CD4-positive, alpha-beta T cell (primary cell): ENCODE measurements at regions of chr10 and their contacts with region 1.

Region 1: GRCh38 chr10:100535715-100536353 is at the start of gene HIF1AN:
- DNase-seq: peak; percentile 75 to 97 (median 85)
- ATAC-seq: peak; percentile 99
- H3K4me3 ChIP-seq: peak within 1 kb of the TSS; percentile 77
- H3K4me3 Mint-ChIP-seq: peak within 1 kb of the TSS; percentile 31
- H3K27ac ChIP-seq: peak within 1 kb of the TSS; percentile 59 to 67
- H3K27ac Mint-ChIP-seq: peak within 1 kb of the TSS; percentile 27
- H3K4me1 ChIP-seq: peaks cover 20% of the 10 kb centered on the region
- H3K4me1 Mint-ChIP-seq: peaks cover 9% of the 10 kb centered on the region
- H3K27me3 ChIP-seq: no peaks in the 10 kb centered on the region
- H3K27me3 Mint-ChIP-seq: no peaks in the 10 kb centered on the region
- CTCF ChIP-seq: peak; percentile 88
- total RNA-seq, gene HIF1AN: 29.7 to 30.5 TPM

Region 2: DNA sequence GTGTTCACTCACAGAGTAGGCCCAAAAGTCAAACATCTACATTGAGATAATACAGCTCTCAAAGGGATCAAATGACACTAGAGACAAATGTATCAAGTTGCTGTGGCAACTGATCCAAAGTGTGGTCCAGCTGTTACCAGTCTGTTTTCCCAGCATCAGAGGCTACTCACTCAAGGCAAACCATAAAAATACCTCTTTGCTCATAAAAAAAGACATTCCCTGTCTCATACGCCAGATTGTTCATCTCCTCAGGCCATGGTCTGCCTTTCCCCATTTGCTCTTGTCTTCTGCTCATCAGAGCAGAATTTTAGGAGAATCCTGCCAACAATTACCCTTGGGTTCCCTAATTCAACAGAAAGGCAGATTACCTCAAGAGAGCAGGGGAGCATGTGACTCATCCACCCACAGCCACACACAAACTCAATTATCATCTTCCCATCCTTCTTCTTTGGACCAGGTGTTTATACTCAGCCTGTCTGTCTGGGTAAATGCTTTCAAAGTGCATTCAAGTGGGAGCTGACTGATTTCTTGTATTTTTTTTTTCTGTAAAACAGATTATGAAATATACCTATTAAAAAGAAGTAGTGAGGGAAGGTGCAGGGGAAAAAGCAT is 1862.6 kb before region 1 on chr10:
- CTCF ChIA-PET with region 1: no interaction called
- POLR2A ChIA-PET with region 1: no interaction called
- intact Hi-C with region 1: no loop called
- DNase-seq: no peak
- ATAC-seq: no peak
- H3K4me3 ChIP-seq: no peak overlapping the region
- H3K4me3 Mint-ChIP-seq: no peak overlapping the region
- H3K27ac ChIP-seq: no peak overlapping the region
- H3K27ac Mint-ChIP-seq: no peak overlapping the region
- H3K4me1 ChIP-seq: no peaks in the 10 kb centered on the region
- H3K4me1 Mint-ChIP-seq: no peaks in the 10 kb centered on the region
- H3K27me3 ChIP-seq: peaks cover 2 to 5% of the 10 kb centered on the region in 2 experiments
- H3K27me3 Mint-ChIP-seq: peaks cover 26% of the 10 kb centered on the region
- CTCF ChIP-seq: no peak

Region 3: DNA sequence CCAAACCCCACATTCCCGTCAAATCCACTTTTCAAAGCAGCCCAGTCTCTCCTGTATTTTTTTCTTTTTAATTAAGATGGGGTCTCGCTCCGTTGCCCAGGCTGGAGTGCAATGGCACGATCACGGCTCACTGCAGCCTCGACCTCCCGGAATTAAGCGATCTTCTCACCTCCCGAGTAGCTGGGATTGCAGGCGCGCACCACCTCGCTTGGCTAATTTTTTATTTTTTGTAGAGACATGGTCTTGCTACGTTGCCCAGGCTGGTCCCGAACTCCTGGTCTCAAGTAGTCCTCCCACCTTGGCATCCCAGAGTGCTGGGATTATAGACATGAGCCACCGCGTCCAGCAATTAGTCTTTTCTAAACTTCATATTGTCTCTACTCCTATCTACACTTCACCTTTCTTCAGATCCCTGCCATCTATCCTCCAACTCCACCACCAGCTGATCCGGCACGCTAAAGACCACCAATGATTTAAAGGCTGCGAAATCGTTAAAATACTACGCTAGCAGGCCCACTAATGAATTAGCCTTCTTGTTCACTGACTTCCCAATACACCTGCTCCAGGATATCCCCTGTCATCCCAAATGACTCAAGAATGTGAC is 305.9 kb before region 1 on chr10:
- CTCF ChIA-PET with region 1: no interaction called
- POLR2A ChIA-PET with region 1: no interaction called
- intact Hi-C with region 1: loop called in 1 of 2 experiments (anchors 5 kb)
- DNase-seq: peak in 2 of 14 experiments; percentile 5 to 8
- ATAC-seq: no peak
- H3K4me3 ChIP-seq: peak overlapping the region; percentile 95
- H3K4me3 Mint-ChIP-seq: peak overlapping the region; percentile 88
- H3K27ac ChIP-seq: peak overlapping the region; percentile 62 to 72
- H3K27ac Mint-ChIP-seq: peak overlapping the region; percentile 60
- H3K4me1 ChIP-seq: peaks cover 16% of the 10 kb centered on the region
- H3K4me1 Mint-ChIP-seq: peaks cover 35% of the 10 kb centered on the region
- H3K27me3 ChIP-seq: no peaks in the 10 kb centered on the region
- H3K27me3 Mint-ChIP-seq: no peaks in the 10 kb centered on the region
- CTCF ChIP-seq: no peak

Region 4: DNA sequence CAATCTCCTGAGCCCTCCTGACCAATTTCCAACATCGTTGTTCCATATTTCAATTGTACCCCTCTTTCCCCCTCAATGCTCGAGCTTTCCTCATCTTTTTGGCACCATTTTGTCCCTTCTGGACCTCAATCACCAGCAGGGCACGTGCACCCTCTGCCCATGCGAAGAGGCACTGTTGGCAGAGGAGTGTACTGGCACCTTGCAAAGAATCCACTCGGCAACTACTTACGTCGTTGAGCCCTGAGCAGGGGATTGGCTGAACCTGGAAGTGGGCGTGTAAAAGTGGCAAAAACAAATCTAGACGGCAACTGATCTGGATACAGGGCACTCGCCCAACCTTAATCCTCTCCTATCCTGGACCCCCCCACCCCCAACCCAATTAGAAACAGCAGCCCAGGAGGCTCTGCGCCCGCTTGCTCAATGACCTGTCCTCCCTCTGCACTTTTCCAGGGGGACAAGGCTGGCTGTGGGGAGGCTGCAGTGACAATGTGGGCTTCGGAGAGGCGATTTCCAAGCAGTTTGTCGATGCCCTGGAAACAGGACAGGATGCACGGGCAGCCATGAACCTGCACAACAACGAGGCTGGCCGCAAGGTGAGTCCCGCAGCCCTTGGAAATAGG is 54.3 kb before region 1 on chr10:
- CTCF ChIA-PET with region 1: interaction called, 13 read pairs
- POLR2A ChIA-PET with region 1: no interaction called
- intact Hi-C with region 1: no loop called
- DNase-seq: peak; percentile 79 to 98 (median 92)
- ATAC-seq: peak; percentile 96
- H3K4me3 ChIP-seq: peak overlapping the region; percentile 69
- H3K4me3 Mint-ChIP-seq: peak overlapping the region; percentile 80
- H3K27ac ChIP-seq: no peak overlapping the region
- H3K27ac Mint-ChIP-seq: no peak overlapping the region
- H3K4me1 ChIP-seq: peaks cover 17% of the 10 kb centered on the region
- H3K4me1 Mint-ChIP-seq: peaks cover 13% of the 10 kb centered on the region
- H3K27me3 ChIP-seq: peaks cover 17 to 22% of the 10 kb centered on the region in 2 experiments
- H3K27me3 Mint-ChIP-seq: peaks cover 32% of the 10 kb centered on the region
- CTCF ChIP-seq: no peak

Region 5: GRCh38 chr10:100518761-100519241 is 17.0 kb before region 1 on chr10:
- CTCF ChIA-PET with region 1: interaction called, 17 read pairs
- POLR2A ChIA-PET with region 1: interaction called, 8 read pairs
- intact Hi-C with region 1: no loop called
- DNase-seq: peak; percentile 38 to 76 (median 52)
- ATAC-seq: peak; percentile 80
- H3K4me3 ChIP-seq: no peak overlapping the region
- H3K4me3 Mint-ChIP-seq: no peak overlapping the region
- H3K27ac ChIP-seq: no peak overlapping the region
- H3K27ac Mint-ChIP-seq: peak overlapping the region; percentile 29
- H3K4me1 ChIP-seq: peaks cover 12% of the 10 kb centered on the region
- H3K4me1 Mint-ChIP-seq: peaks cover 16% of the 10 kb centered on the region
- H3K27me3 ChIP-seq: no peaks in the 10 kb centered on the region
- H3K27me3 Mint-ChIP-seq: no peaks in the 10 kb centered on the region
- CTCF ChIP-seq: peak; percentile 88

Region 6: DNA sequence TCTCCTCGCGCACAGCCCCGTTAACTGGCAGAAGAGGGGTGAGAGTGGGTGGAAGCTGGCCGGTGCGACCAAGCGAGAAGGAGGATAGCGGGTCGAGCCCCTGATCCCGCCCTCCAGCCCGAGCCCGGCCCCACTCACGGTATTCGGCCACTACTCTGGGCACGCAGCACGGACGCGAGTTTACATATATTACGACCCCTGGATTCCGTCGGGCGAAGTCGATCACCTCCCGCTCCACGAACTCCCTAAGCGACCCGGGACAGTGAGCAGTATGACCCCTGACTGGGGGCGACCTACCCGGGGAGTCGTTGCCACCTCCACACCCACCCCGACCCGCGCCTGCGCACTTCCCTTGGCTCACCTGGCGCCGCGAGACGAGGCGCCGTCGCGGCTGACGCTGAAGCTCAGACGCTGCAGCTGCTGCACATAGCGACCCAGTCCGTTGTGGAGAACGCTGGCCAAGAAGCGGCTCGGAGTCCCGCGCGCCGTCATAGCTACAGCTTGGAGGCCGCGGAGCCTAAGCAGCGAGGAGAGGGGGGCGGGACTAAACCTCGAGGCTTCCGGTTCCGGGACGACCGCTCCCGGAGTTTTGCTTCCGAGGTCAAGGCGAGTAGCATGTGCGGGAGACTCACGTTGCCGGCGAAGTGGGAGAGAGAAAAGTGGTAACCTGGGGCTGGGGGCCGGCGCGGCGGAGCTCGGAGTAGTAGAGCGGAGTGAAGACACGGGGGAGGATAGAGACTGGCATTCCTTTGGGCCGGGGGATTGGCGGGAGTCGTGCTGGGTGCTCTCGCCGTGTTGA is 451.3 kb after region 1 on chr10 and contains the starts of genes MRPL43 and TWNK:
- CTCF ChIA-PET with region 1: no interaction called
- POLR2A ChIA-PET with region 1: no interaction called
- intact Hi-C with region 1: loop called in 1 of 2 experiments (anchors 5 kb)
- DNase-seq: peak; percentile 74 to 92 (median 81)
- ATAC-seq: peak; percentile 96
- H3K4me3 ChIP-seq: peak within 1 kb of the TSS; percentile 96
- H3K4me3 Mint-ChIP-seq: peak within 1 kb of the TSS; percentile 97
- H3K27ac ChIP-seq: peak within 1 kb of the TSS; percentile 52 to 67
- H3K27ac Mint-ChIP-seq: peak within 1 kb of the TSS; percentile 86
- H3K4me1 ChIP-seq: peaks cover 41% of the 10 kb centered on the region
- H3K4me1 Mint-ChIP-seq: peaks cover 26% of the 10 kb centered on the region
- H3K27me3 ChIP-seq: no peaks in the 10 kb centered on the region
- H3K27me3 Mint-ChIP-seq: no peaks in the 10 kb centered on the region
- CTCF ChIP-seq: no peak
- total RNA-seq, gene MRPL43: 28.5 to 31.0 TPM
- total RNA-seq, gene TWNK: 2.7 to 2.8 TPM

Region 7: GRCh38 chr10:101485681-101486554 is 950.1 kb after region 1 on chr10:
- CTCF ChIA-PET with region 1: no interaction called
- POLR2A ChIA-PET with region 1: no interaction called
- intact Hi-C with region 1: no loop called
- DNase-seq: no peak
- ATAC-seq: no peak
- H3K4me3 ChIP-seq: no peak overlapping the region
- H3K4me3 Mint-ChIP-seq: no peak overlapping the region
- H3K27ac ChIP-seq: no peak overlapping the region
- H3K27ac Mint-ChIP-seq: no peak overlapping the region
- H3K4me1 ChIP-seq: no peaks in the 10 kb centered on the region
- H3K4me1 Mint-ChIP-seq: peaks cover 13% of the 10 kb centered on the region
- H3K27me3 ChIP-seq: no peaks in the 10 kb centered on the region
- H3K27me3 Mint-ChIP-seq: no peaks in the 10 kb centered on the region
- CTCF ChIP-seq: no peak

Region 8: DNA sequence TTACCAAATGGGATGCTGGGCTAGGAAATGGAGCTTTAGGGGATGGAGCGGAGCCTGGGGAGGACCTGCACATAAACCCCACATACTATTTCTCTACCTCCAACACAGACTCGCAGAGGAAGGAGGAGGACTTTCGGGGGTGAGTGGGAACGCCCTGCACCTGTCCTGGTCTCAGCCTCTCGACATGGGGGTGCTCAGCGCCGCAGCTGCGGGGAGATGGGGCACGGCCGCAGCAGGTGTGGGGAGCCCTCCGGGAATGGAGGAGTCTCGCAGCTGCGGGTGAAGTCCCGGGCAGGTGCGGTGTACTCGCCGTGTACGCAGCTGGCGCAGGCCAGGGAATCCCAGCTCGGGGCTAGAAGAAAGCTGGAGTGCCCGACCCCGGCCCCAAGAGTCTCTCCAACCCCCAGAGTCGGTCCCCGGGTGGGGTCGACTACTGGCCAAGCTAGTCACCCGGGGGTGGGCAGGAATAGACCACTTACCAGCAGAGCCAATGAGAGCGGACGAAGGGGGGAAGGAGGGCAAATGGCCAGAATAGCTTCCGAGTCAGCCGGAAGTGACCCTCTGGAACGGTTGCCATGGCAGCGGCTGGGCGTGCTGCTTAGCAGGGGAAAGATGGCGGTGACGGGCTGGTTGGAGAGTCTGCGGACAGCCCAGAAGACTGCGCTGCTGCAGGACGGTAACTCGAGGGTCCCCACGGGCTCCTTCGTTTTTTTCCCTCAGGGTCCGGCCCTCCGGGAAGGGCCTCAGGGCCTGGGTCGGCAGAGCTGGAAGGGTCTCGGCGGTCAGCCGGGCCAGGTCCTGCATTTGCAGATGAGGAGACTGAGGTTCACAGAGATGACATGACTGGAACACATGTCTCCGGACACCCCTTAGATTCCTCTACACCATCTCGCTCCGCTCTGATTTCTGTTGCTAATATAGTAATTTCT is 1052.2 kb after region 1 on chr10 and contains the starts of genes DPCD and POLL:
- CTCF ChIA-PET with region 1: no interaction called
- POLR2A ChIA-PET with region 1: no interaction called
- intact Hi-C with region 1: loop called in 1 of 2 experiments (anchors 5 kb)
- DNase-seq: peak; percentile 80 to 94 (median 88)
- ATAC-seq: peak; percentile 90
- H3K4me3 ChIP-seq: peak within 1 kb of the TSS; percentile 72
- H3K4me3 Mint-ChIP-seq: peak within 1 kb of the TSS; percentile 97
- H3K27ac ChIP-seq: peak within 1 kb of the TSS in 1 of 2 donors; percentile 59
- H3K27ac Mint-ChIP-seq: peak within 1 kb of the TSS; percentile 79
- H3K4me1 ChIP-seq: peaks cover 24% of the 10 kb centered on the region
- H3K4me1 Mint-ChIP-seq: peaks cover 24% of the 10 kb centered on the region
- H3K27me3 ChIP-seq: no peaks in the 10 kb centered on the region
- H3K27me3 Mint-ChIP-seq: peaks cover 6% of the 10 kb centered on the region
- CTCF ChIP-seq: no peak
- total RNA-seq, gene DPCD: 0.31 to 0.96 TPM
- total RNA-seq, gene POLL: 23.3 to 24.3 TPM